ENCODE measurements at regions of chr1 and their contacts with region 1.

Region 1: GRCh38 chr1:156987715-156988114 is 57.8 kb downstream of the ARHGEF11 start:
- DNase-seq: no peak
- ATAC-seq: no peak
- H3K4me3 ChIP-seq: no peak overlapping the region
- H3K27ac ChIP-seq: no peak overlapping the region
- H3K4me1 ChIP-seq: no peaks in the 10 kb centered on the region
- H3K27me3 ChIP-seq: no peaks in the 10 kb centered on the region

Region 2: DNA sequence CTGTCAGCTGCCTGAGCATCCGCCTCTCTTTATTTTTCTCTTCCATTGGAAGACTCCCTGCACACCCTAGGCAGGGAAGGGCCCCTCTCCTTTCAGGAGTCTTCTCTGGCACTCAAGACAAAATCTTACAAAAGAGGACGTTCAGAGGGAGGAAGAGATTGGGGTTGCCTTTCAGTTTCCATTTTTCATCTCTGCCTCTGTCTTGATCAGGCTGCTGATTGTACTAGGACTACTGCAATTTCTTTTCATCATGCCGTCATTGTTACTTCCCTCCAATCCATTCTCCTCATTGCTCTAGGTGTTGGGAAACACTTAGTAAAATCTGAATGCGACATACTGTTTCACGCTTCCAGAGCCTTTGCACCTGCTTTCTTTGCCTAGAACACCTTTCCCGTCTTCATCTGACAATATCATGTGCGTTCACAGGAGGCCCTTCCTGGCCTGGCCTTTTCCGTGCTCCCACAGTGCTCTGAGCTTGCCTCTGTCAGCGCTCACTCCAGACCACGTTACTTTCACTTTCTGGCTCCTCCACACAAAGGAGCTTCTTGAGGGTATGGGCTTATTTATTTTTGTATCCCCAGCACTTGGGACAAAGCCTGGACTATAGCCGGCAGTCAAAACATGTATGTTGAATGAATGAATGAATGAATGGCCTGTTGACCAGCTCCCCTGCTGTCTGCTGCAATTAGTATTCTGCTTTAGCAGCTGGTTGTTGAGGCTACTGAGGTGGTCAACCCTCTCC is 56.3 kb before region 1 on chr1:
- intact Hi-C with region 1: no loop called
- DNase-seq: no peak
- ATAC-seq: peak; percentile 38 to 49
- H3K4me3 ChIP-seq: no peak overlapping the region
- H3K27ac ChIP-seq: no peak overlapping the region
- H3K4me1 ChIP-seq: no peaks in the 10 kb centered on the region
- H3K27me3 ChIP-seq: no peaks in the 10 kb centered on the region

Region 3: DNA sequence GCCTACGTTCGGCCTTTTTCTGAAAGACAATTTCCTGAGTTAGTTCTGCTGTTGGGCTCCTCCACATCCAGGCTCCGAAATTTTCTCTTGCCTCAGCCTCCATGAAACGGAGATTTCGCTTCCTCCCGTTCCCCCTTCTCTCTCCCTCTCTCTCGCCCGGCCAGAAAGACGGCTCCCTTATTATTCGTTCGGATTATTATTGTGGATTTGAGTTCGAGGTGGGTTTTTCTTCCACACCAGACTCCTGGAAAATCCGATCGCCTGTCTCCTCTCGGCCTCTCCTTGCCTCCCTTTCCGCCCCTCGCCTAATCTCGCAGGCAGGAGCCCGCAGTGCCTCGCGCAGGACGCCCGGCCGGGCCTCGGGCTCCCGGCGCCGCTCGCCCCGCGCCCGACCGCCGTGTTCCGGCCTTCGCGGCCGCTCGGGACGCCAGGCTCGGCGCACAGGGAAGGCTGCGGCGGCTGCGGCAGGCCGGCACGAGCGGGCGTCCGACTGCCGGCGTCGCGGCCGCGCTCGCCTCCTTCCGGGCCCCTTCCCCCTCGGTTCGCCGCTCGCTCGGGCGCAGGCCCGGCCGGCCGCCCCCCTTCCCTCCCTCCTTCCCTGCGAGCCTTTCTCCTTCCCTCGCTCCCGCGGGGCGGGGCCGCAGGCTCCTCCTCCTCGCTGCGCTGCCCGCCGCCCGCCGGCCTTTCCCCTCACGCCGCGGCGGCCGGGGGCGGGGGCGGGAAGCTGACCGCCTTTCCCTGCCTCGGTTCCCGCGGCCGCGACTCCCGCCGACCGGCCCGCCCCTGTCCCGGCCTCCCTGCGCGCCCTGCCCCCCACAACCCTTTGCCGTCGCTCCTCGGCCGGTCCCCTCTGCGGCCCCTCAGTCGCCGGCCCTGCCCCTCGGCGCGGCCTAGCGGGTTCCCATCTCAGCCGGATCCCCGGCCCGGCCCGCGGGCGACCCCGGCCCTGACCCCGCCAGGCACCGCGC is 57.8 kb after region 1 on chr1 and contains the start of gene ARHGEF11:
- intact Hi-C with region 1: loop called in 1 of 4 experiments (anchors 10 kb)
- DNase-seq: peak; percentile 91 to 97 (median 97)
- ATAC-seq: peak; percentile 97 to 98
- H3K4me3 ChIP-seq: peak within 1 kb of the TSS; percentile 72
- H3K27ac ChIP-seq: peak within 1 kb of the TSS; percentile 85
- H3K4me1 ChIP-seq: peaks cover 19% of the 10 kb centered on the region
- H3K27me3 ChIP-seq: no peaks in the 10 kb centered on the region
- total RNA-seq, gene ARHGEF11: 29.4 to 34.4 (median 30.1) TPM

Region 4: GRCh38 chr1:157163273-157164127 is 175.8 kb after region 1 on chr1:
- intact Hi-C with region 1: no loop called
- DNase-seq: peak; percentile 44 to 85 (median 79)
- ATAC-seq: peak; percentile 34 to 70
- H3K4me3 ChIP-seq: no peak overlapping the region
- H3K27ac ChIP-seq: no peak overlapping the region
- H3K4me1 ChIP-seq: no peaks in the 10 kb centered on the region
- H3K27me3 ChIP-seq: no peaks in the 10 kb centered on the region